ENCODE measurements at regions of chr5 and their contacts with region 1.

Region 1: DNA sequence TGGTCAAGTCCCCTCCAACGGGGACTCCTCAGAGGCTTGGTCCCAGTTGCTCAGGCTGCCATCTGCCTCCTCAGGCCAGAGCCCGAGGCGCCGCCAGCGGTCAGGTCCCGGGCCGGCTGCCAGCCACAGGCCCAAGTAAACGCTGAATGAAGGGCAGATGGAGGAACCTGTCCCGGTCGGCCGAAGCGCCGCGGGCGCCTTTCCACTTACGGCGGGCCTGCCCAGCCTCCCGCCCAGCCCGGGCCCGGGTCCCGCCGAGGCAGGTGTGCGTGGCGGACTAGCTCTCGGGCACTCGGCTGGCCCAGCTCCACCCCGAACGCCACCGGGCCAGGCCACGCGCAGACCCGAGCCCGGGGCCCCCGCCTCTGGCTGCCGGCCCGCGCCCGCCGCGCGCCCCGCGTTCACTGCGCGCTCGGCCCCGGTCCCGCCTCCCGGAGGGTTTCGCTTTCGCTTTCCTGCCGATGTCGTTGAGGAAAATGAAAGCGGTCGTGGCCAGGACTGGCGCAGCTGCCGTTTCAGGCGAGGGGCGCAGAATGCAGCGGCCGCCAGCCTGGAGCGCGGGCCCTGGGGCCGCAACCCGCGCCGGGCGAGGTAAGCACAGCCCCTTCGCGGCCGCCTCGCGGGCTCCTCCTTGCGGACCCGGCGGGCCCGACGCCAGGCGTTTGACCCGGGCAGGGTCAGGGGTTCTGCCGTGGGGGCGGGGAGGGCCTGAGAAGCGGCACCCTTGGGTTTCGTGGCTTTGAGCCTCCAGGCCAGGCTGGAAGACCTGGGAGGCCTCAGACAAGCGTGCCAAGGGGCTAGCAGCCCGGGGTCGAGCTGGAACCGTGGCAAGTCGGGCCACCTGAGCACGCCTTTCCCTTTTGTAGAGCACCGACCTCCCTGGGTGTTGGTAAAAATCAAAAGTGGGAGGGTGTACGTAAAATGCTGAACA is 41.2 kb downstream of the SLC22A5 start:
- DNase-seq: peak; percentile 89
- H3K4me3 Mint-ChIP-seq: peak overlapping the region; percentile 95
- H3K27ac Mint-ChIP-seq: peak overlapping the region; percentile 99
- H3K4me1 Mint-ChIP-seq: peaks cover 59% of the 10 kb centered on the region
- H3K27me3 Mint-ChIP-seq: no peaks in the 10 kb centered on the region

Region 2: DNA sequence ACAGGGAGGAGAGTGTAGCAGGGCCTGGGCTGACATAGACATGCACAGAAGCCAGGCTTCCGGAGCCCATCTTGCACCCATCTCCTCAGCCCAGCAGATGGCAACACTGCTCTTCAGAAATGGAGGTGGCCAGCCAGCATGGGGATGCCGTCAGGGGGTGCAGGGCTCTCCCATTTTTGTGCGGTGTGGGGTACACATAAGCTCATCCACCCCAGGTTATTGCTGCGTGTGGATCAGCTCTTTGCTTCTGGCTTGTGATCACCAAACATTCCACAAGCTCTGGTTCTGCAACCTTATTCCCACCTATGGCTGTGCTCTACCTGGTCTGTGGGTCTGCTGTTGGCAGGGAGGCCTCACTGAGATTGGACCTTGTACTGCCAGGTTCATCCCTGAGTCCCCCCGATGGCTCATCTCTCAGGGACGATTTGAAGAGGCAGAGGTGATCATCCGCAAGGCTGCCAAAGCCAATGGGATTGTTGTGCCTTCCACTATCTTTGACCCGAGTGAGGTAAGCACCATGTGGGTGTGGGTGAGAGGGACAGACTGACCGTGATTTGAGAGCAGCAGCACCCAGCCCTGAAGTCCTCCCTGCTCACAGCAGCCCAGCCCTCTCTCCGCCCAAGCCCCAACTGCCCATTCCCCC is 24.0 kb before region 1 on chr5:
- CTCF ChIA-PET with region 1: interaction called, 29 read pairs
- POLR2A ChIA-PET with region 1: interaction called, 34 read pairs
- DNase-seq: peak; percentile 83
- H3K4me3 Mint-ChIP-seq: no peak overlapping the region
- H3K27ac Mint-ChIP-seq: peak overlapping the region; percentile 31
- H3K4me1 Mint-ChIP-seq: peaks cover 52% of the 10 kb centered on the region
- H3K27me3 Mint-ChIP-seq: no peaks in the 10 kb centered on the region